ENCODE measurements at regions of chr9 and their contacts with region 1.

Region 1: GRCh38 chr9:15724016-15724415 is 171.2 kb downstream of the CCDC171 start:
- DNase-seq: peak; percentile 80
- H3K4me3 Mint-ChIP-seq: no peak overlapping the region
- H3K27ac Mint-ChIP-seq: peak overlapping the region; percentile 84
- H3K4me1 Mint-ChIP-seq: peaks cover 15% of the 10 kb centered on the region
- H3K27me3 Mint-ChIP-seq: no peaks in the 10 kb centered on the region
- CTCF ChIP-seq: no peak

Region 2: DNA sequence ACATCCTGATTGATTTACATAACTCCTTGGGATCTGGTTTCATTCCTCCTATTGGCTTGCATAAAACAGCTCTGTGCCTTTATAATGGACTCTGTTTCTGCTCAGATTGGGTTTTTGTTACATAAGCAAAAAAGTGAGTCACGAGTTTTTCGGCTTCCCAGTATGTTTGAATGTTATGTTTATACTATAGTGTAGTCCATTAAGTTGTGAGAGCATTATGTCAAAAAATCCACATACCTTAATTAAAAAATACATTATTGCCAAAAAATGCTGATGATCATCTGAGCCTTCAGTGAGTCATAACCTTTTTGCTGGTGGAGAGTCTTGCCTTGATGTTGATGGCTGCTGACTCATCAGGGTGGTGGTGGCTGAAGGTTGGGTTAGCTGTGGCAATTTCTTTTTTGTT is 26.6 kb before region 1 on chr9:
- CTCF ChIA-PET with region 1: interaction called, 3 read pairs
- POLR2A ChIA-PET with region 1: interaction called, 13 read pairs
- intact Hi-C with region 1: no loop called
- DNase-seq: peak; percentile 86
- H3K4me3 Mint-ChIP-seq: no peak overlapping the region
- H3K27ac Mint-ChIP-seq: peak overlapping the region; percentile 81
- H3K4me1 Mint-ChIP-seq: peaks cover 17% of the 10 kb centered on the region
- H3K27me3 Mint-ChIP-seq: no peaks in the 10 kb centered on the region
- CTCF ChIP-seq: no peak

Region 3: DNA sequence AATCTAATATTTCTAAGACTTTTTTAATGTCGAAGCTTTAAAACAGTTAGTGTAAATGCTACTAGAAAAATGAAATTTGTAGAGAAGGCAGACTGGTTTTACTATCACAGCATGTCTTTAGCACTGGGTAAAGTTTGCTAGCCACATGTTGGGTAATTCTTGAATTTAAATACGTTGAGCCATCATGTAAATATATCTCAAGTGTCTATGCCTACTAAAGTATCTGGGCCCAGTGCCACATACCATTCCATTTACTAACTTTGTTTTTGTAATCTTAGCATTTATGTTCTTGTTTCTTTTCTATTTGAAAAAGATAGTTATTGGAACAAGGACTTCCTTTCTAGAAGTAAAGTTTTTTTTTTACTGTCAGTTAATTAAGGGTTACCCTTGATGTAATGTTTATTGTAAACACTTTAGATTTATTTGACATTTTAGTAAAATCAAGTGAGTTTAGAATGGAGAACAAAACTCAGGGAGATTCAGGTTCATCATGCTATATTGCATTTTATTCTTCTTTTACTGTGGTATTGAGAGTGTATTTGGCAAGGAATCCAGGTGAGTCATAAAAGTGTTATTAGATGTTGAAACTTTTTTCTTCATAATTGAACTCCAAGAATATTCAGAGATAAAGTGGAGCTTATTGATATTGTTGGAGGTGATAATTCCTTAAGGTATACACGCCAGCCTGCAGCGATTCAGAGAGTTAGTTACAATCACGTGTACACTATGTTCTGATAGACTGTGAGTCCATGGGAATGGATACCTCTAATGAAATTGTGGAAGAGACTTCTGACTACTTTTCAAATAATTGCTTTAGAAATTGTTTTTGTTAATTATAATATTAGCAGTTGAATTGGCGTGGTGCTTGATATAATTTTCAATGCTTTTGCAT is 11.3 kb after region 1 on chr9:
- CTCF ChIA-PET with region 1: interaction called, 4 read pairs
- POLR2A ChIA-PET with region 1: interaction called, 13 read pairs
- intact Hi-C with region 1: no loop called
- DNase-seq: peak; percentile 90
- H3K4me3 Mint-ChIP-seq: peak overlapping the region; percentile 44
- H3K27ac Mint-ChIP-seq: peak overlapping the region; percentile 76
- H3K4me1 Mint-ChIP-seq: peaks cover 18% of the 10 kb centered on the region
- H3K27me3 Mint-ChIP-seq: no peaks in the 10 kb centered on the region
- CTCF ChIP-seq: no peak